Dorsolateral prefrontal cortex (tissue), 120 donors: ENCODE measurements at regions of chr21 and their contacts with region 1.

Region 1: DNA sequence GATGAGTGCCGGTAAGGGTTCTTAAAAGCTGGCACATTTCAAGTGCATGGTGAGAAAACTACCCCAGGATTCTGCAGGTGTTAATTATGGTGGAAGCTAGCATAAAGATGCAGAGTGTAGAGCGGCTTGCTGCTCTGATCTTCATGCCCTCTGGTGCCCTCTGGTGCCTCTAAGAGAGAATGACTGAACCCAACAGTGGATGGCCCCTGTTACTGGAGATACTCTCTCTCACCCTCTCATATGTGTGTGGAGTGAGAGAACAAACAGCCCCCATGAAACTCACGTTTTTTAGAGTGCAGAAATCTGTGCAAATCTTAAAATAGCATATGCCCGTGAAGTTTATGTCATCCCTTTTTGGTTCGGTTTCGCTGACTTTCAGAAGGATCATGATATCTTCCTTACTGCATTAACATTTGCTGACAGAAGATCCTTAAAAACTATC is 90.0 kb downstream of the GRIK1 start:
- DNase-seq: peak in 8 of 10 donors; percentile 12 to 70 (median 54)
- H3K4me3 ChIP-seq: no peak overlapping the region
- H3K27ac ChIP-seq: no peak overlapping the region
- H3K27me3 ChIP-seq: no peaks in the 10 kb centered on the region
- CTCF ChIP-seq: peak; percentile 37 to 83 (median 72)

Region 2: DNA sequence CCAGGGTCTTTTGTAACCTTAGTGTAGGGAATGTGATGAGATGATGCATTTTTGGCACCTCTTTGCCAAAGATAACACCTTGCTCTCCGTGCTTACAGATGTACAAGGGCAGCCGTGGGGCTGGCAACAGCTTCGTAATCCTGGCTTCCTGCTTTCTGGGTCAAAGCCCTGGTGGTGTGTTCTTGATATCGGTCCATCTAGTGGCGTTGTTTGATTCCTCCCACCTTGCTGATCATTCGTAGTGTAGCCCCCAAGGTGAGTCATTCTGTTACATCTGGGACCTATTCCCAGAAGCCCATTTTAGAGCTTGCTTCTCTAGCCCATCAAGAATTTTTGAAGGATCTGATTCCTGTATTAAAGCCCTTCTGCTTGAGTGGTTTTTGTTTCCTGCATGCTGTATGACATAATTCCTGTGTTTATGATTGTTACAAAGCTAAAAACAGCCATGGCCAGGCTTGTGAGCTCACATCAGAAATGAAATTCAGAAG is 769.3 kb before region 1 on chr21:
- intact Hi-C with region 1: loop called in 1 of 2 experiments (anchors 10 kb)
- DNase-seq: no peak
- H3K4me3 ChIP-seq: peak overlapping the region in 1 of 59 donors; percentile 8
- H3K27ac ChIP-seq: peak overlapping the region in 23 of 59 donors; percentile 0 to 89 (median 25)
- H3K27me3 ChIP-seq: no peaks in the 10 kb centered on the region
- CTCF ChIP-seq: no peak

Region 3: GRCh38 chr21:29477941-29478340 is 371.8 kb before region 1 on chr21:
- intact Hi-C with region 1: loop called (anchors 5 to 10 kb)
- DNase-seq: no peak
- H3K4me3 ChIP-seq: no peak overlapping the region
- H3K27ac ChIP-seq: no peak overlapping the region
- H3K27me3 ChIP-seq: no peaks in the 10 kb centered on the region
- CTCF ChIP-seq: no peak

Region 4: DNA sequence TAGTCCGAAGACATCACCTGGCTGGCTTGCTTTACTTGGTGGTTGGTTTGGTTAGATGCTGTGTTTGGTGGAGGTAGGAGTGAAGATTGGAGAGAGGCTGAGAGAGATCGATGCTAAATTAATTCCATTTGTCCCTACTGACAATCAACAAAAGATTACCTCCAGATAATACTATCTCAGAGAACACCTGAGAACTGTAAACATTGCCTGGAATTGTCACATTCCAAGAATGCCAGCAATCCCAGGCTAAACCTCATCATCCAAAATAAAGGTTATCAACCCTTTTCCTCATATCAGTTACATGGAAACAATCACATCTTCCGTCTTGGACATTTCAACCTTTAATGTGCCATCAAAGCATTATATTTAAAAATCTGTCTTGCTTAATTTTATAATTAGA is 50.9 kb before region 1 on chr21:
- intact Hi-C with region 1: no loop called
- DNase-seq: no peak
- H3K4me3 ChIP-seq: no peak overlapping the region
- H3K27ac ChIP-seq: no peak overlapping the region
- H3K27me3 ChIP-seq: no peaks in the 10 kb centered on the region
- CTCF ChIP-seq: no peak